ENCODE measurements at regions of chr1 and their contacts with region 1.

Region 1: DNA sequence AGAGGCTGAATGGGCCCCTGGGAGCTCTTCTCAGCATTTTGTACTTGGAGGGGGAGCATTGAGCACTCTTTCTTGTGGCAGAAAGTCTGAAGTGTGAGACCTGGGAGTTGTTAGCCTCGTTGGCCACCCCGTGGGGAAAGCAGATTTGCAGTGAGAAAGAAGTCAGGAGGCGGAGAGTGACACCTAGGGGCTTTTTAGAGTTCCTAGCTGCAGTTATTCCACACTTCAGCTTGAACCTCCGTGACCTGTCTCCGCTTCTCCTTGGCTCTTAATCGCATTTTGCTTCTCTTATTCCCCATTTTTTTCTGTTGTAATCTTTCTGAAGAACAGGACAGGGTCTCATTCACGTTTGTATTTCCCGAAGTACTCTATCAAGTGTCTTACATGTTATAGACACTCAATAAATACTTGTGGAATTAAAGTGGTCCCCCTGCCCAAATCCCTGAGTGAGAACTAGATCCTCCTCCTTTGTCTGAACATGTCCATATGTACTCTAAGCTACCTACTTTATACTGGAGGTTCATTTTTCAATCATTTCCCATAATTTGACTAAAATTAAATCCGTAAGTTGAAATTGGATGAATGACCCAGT is 14.5 kb upstream of the C1orf141 start:
- DNase-seq: peak in 7 of 10 donors; percentile 32 to 86 (median 56)

Region 2: DNA sequence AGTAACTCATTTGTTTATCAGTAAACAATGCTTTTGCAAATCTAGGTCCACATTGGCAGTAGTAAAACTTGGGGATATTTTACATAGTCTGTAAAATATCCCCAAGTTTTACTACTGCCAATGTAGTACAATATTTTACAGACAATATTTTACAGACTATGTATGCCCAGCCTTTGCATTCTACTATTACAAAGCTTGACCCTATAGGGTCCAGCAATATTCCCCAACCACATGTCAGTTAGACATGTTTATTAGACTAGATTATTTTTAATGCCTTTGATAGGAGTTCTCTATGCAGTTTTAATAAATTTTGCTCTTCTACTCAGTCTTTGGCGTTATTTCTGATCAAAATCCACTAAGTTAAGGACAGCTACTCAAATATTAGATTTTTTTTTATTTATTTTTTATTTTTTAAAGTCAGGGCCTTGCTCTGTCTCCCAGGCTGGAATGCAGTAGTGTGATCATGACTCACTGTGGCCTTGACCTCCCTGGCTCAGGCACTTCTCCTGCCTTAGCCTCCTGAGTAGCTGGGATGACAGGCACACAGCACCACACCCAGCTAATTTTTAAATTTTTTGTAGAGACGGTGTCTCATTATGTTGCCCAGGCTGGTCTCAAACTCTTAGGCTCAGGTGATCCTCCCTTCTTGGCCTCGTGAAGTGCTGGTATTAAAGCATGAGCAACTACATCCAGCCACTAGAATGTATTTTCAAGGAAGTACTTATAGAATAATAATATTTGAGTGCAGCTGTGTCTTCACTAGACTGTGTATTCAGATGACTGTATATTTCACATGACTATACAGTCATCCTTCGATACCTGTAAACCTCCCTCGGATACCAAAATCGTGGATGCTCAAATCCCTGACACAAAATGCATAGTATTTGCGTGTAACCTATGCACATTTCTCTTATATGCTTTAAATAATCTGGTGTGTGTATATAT is 204.7 kb before region 1 on chr1:
- intact Hi-C with region 1: no loop called
- DNase-seq: no peak

Region 3: DNA sequence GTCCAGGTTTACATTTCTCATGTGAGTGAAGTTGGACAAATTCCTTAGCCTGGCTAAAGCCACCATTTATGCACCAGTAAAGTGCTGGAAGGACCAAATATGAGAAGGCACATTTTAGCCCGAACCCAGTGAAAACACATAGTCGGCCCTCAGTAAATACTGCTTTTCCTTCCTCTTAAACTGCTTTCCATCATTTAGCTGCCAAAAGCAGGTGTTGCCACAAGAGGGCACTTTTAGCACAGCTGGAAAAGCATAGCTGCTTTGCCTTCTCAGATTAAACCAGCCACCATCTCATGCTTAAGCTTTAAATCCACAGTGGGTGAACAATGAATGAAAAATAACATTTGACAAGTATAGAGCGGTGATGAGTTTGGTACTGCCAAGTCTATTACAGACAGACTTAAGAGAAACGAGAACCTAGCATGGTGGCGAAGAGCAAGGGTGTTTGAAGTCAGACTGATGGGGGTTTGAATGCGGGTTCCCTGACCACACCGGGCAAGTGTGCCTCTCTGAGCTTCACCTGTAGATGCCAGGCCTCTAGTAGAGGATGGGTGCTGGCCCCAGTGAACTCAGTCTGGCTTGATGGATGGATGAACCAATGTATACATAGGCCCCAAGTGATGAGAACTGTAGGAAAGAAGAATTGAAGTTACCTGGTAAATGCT is 153.1 kb before region 1 on chr1:
- intact Hi-C with region 1: loop called (anchors 1 kb)
- DNase-seq: peak in 8 of 10 donors; percentile 22 to 90 (median 66)